ENCODE measurements at regions of chr3 and their contacts with region 1.

Region 1: GRCh38 chr3:169792359-169792758 is 19.2 kb downstream of the MYNN start:
- DNase-seq: no peak
- CTCF ChIP-seq: no peak

Region 2: DNA sequence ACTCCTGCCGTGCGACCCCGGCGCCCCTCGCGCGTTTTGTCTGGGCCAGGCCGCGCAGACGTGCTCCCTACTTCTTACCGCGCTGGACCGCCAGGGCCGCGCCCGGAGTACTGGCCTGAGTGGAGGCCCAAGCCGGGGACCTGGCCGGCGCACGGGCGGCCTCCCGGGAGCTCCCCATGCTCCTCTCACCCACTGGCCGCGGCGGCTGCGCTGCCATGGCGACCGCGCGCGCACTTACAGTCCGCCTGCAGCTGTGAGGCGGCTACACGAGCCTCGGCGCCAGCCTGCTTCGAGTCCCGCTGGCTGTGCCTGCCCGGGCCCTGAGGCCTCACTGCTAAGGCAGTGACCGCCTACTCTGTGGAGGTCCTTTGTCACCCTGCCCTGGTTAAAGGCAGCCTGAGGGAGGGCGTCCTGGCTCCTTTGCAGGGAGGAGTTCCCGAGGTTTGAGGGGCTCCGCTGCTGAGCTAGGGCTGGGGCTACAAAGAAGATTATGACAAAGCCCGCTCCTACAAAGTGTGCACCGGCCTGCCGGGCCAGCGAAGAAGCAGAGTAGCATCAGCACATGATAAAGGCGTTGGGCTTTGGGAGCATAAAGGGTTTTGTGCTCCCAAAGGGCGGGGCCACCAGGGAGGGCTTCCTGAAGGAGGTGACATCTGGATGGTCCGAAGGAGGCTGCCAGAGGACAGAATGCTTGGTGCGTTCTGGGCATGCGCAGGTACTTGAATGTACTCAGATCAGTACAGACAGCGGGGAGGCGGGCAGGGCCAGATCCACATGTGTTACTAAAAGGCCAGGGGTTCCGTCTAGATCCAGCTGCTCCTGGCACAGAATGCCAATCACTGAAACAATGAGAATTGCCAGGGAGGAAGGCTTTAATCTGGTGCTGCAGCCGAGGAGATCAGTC is 20.2 kb after region 1 on chr3 and contains the starts of genes LRRC34 and LRRIQ4:
- CTCF ChIA-PET with region 1: interaction called, 11 read pairs
- POLR2A ChIA-PET with region 1: no interaction called
- DNase-seq: peak; percentile 80
- CTCF ChIP-seq: no peak

Measured in GM10248 (cell line).